ENCODE measurements at regions of chr1 and their contacts with region 1.

Region 1: DNA sequence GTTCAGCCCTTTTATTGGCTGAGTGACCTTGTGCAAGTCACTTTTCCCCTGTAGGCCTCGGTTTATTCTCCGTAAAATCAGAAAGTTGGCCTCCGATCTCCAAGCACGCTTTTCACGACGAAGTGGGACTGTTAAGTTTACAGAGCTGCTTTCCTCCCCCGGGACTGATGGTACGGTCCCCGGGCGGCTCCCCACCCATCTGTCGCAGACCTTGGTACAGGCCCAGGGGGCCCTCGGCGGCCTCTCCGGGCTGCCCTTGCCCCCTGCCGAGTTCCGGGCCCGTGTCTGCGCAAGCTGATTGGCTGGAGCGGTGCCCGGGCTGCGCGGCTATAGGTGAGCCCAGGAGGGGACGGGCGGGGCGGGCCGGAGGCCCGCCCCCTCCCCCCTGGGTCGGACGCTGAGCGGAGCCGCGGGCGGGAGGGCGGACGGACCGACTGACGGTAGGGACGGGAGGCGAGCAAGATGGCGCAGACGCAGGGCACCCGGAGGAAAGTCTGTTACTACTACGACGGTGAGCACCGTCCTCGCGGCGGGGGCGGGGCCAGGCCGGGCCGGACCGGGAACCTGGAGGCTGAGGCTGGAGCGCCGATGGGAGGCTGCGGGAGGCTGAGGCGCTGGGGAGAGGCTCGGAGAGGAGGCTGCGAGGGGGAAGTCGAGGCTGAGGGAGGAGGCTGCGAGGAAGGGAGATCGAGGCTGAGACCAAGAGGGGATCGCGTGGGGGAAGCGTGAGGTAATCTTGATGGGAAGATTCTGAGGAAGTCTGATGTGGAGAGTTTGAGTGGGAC is at the start of gene HDAC1:
- DNase-seq: peak; percentile 93
- H3K4me3 ChIP-seq: peak within 1 kb of the TSS; percentile 85 to 98 (median 91)
- H3K27ac ChIP-seq: peak within 1 kb of the TSS; percentile 50
- H3K4me1 ChIP-seq: peaks cover 6% of the 10 kb centered on the region
- H3K27me3 ChIP-seq: no peaks in the 10 kb centered on the region
- CTCF ChIP-seq: no peak
- total RNA-seq, gene HDAC1: 56.5 to 84.3 TPM

Region 2: GRCh38 chr1:32205401-32206370 is 86.2 kb before region 1 on chr1 and contains the start of gene IQCC:
- CTCF ChIA-PET with region 1: no interaction called
- dilution Hi-C with region 1: loop called (anchors 5 kb)
- in situ Hi-C with region 1: no loop called
- intact Hi-C with region 1: no loop called
- DNase-seq: peak; percentile 79
- H3K4me3 ChIP-seq: peak within 1 kb of the TSS; percentile 61 to 92 (median 79)
- H3K27ac ChIP-seq: peak within 1 kb of the TSS; percentile 68
- H3K4me1 ChIP-seq: peaks cover 13% of the 10 kb centered on the region
- H3K27me3 ChIP-seq: no peaks in the 10 kb centered on the region
- CTCF ChIP-seq: no peak
- total RNA-seq, gene IQCC: 2.2 to 3.9 TPM

Region 3: DNA sequence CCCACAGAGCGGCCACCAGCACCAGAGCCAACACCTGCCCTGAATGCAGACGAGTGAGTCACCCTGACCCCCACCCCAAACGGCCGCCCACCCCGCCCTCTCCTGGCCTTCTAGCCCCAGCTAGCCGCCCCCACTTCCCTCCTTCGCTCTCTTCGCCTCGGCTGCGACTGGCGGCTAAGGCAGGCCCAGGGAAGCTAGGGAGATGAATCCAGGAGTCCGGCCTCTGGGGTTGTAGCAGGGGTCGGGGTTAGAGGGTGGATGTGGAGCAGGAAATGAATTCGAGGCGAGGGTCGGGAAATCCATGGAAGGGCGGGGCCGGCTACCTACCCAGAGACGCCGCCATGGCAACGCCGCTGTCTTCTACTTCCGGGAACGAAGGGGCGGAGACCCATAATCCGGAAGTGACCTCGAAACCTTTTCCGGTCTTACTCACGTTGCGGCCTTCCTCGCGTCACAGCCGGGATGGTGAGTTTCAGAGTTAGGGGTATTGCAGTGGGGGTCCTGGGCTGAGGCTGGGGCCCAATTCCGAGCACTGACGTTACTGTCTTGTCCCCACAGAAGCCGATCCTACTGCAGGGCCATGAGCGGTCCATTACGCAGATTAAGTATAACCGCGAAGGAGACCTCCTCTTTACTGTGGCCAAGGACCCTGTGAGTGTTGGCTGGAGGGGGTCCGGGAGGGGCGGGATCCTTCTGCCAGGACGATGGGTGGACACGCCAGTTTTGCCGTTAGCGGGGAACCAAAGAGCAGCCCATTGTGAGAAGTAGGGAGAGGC is 69.7 kb before region 1 on chr1 and contains the starts of genes EIF3I and TMEM234:
- CTCF ChIA-PET with region 1: no interaction called
- dilution Hi-C with region 1: no loop called
- in situ Hi-C with region 1: no loop called
- intact Hi-C with region 1: loop called (anchors 5 kb)
- DNase-seq: peak; percentile 86
- H3K4me3 ChIP-seq: peak within 1 kb of the TSS; percentile 52 to 69 (median 64)
- H3K27ac ChIP-seq: peak within 1 kb of the TSS; percentile 95
- H3K4me1 ChIP-seq: peaks cover 11% of the 10 kb centered on the region
- H3K27me3 ChIP-seq: no peaks in the 10 kb centered on the region
- CTCF ChIP-seq: no peak
- total RNA-seq, gene EIF3I: 230 to 277 TPM
- total RNA-seq, gene TMEM234: 18.2 to 24.4 TPM

Region 4: GRCh38 chr1:32247983-32248889 is 43.7 kb before region 1 on chr1:
- CTCF ChIA-PET with region 1: no interaction called
- dilution Hi-C with region 1: loop called (anchors 5 kb)
- in situ Hi-C with region 1: no loop called
- intact Hi-C with region 1: no loop called
- DNase-seq: peak; percentile 65
- H3K4me3 ChIP-seq: no peak overlapping the region
- H3K27ac ChIP-seq: no peak overlapping the region
- H3K4me1 ChIP-seq: peaks cover 34% of the 10 kb centered on the region
- H3K27me3 ChIP-seq: no peaks in the 10 kb centered on the region
- CTCF ChIP-seq: peak; percentile 73 to 81

Region 5: DNA sequence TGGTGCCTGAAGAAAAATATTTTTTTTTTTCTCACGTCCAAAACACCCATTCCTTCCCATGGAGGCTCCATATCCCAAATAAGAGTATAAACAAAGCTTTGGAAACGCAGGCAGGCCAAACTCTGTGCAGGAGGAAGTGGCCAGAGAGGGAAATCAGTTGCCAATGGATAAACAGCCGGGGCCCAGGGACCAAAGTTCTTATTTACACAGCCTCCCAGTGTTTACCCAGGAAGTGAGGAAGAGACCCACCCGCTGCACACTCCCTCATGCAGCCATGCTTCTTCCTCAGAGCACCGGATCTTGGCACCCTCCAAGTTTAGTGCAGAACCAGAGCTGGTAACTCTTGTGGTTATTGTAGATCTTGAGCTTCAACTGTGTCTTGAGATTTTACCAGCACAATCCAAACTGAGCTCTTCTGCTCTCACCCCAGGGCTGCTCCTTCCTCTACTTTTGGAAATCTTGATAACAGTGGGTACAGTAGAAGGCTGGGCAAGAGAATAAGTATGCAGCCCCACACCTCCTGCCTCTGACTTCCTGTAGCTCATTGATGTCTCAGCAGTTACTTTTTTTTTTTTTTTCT is 29.9 kb after region 1 on chr1:
- CTCF ChIA-PET with region 1: no interaction called
- dilution Hi-C with region 1: loop called (anchors 5 kb)
- in situ Hi-C with region 1: no loop called
- intact Hi-C with region 1: no loop called
- DNase-seq: no peak
- H3K4me3 ChIP-seq: no peak overlapping the region
- H3K27ac ChIP-seq: no peak overlapping the region
- H3K4me1 ChIP-seq: no peaks in the 10 kb centered on the region
- H3K27me3 ChIP-seq: no peaks in the 10 kb centered on the region
- CTCF ChIP-seq: no peak

Region 6: GRCh38 chr1:32351399-32352238 is 59.7 kb after region 1 on chr1:
- CTCF ChIA-PET with region 1: no interaction called
- dilution Hi-C with region 1: loop called (anchors 5 kb)
- in situ Hi-C with region 1: no loop called
- intact Hi-C with region 1: loop called (anchors 1 kb)
- DNase-seq: peak; percentile 73
- H3K4me3 ChIP-seq: peak overlapping the region; percentile 45 to 78 (median 58)
- H3K27ac ChIP-seq: peak overlapping the region; percentile 22
- H3K4me1 ChIP-seq: peaks cover 20% of the 10 kb centered on the region
- H3K27me3 ChIP-seq: no peaks in the 10 kb centered on the region
- CTCF ChIP-seq: no peak

Region 7: GRCh38 chr1:32521165-32521564 is 229.3 kb after region 1 on chr1:
- CTCF ChIA-PET with region 1: interaction called, 10 read pairs
- dilution Hi-C with region 1: no loop called
- in situ Hi-C with region 1: no loop called
- intact Hi-C with region 1: no loop called
- DNase-seq: no peak
- H3K4me3 ChIP-seq: no peak overlapping the region
- H3K27ac ChIP-seq: no peak overlapping the region
- H3K4me1 ChIP-seq: no peaks in the 10 kb centered on the region
- H3K27me3 ChIP-seq: no peaks in the 10 kb centered on the region
- CTCF ChIP-seq: peak in 1 of 2 donors; percentile 18